OCI-LY7 (cell line): ENCODE measurements at regions of chr5 and their contacts with region 1.

Region 1: DNA sequence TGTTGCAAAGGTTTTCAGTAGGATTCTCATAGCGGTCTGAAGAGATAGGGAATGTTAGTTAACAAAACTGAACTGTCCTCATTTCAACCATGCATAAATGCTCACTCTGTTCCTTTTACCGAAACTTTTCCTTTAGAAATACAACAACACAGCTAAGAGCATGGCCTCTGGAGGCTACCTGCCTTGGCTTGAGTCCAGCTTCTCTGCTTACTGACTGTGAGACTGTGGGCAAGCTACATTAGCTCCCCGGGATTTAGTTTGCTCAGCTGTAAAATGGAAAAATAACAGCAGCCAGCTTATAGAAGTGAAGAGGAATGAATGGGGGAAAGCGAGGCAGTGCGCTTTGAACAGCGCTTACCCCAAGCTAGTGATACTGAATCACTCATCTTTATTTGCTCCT is 507.9 kb upstream of the DAP start:
- DNase-seq: no peak
- H3K4me3 ChIP-seq: no peak overlapping the region
- H3K27ac ChIP-seq: no peak overlapping the region
- H3K4me1 ChIP-seq: no peaks in the 10 kb centered on the region
- CTCF ChIP-seq: no peak

Region 2: GRCh38 chr5:11494340-11494739 is 225.4 kb after region 1 on chr5:
- CTCF ChIA-PET with region 1: no interaction called
- POLR2A ChIA-PET with region 1: no interaction called
- intact Hi-C with region 1: loop called (anchors 10 kb)
- DNase-seq: no peak
- H3K4me3 ChIP-seq: no peak overlapping the region
- H3K27ac ChIP-seq: no peak overlapping the region
- H3K4me1 ChIP-seq: no peaks in the 10 kb centered on the region
- CTCF ChIP-seq: peak; percentile 72